Dendritic cell treated with granulocyte-macrophage colony-stimulating factor and Interleukin-4, amounts not matched to agents 40 ng/mL and 50 ng/mL, for 4 days (primary cell): ENCODE measurements at regions of chr15 and their contacts with region 1.

Region 1: DNA sequence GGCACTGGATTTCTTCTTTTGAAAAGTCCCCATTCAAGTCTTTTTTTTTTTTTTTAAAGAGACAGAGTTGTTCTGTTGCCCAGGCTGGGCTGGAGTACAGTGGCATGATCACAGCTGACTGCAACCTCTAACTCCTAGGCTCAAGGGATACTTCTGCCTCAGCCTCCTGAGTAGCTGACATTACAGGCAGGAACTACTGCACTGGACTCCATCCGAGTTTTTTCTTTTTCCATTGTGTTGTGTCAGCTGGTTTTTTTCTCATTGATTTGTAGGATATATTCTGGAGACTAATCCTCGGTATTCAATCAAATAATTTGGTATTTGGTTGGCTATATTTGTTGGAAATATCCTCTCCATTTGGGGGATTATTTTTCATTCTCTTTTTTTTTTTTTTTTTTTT is 11.8 kb downstream of the POLR2M start:
- H3K4me3 Mint-ChIP-seq: no peak overlapping the region
- H3K27ac Mint-ChIP-seq: no peak overlapping the region
- H3K4me1 Mint-ChIP-seq: no peaks in the 10 kb centered on the region
- H3K27me3 Mint-ChIP-seq: no peaks in the 10 kb centered on the region

Region 2: DNA sequence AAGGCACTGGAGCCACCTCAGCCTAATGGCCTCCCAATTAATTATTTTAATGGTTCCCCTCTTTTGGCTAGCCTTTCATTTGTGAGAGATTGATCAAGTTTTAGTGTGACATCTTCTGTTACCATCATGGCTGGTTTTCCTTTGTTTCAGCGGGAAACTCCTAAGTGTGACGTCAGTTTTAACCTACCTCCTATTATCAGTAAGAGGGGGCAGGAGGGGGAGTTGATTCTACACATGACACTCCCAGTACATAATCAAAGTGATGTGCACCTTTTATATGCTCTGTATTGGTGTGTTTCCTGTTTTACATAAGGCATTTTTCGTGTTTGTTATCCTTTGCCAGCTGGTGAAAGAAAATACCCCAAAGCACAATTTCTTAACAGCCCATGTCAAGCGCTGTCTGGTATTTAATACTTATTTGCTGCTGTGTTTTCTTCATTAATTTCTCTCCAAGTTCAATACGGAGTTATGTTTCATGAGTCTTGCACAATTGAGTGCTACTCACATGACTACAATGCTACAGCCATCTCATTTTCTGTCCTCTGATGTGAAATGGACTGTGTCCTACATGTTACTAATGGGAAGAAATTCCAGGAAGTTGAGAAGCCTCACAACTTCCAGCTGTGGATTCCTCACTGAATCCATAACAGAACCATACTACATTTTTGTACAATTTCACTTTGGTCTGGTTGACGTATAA is 64.0 kb before region 1 on chr15:
- intact Hi-C with region 1: loop called (anchors 10 kb)
- H3K4me3 Mint-ChIP-seq: no peak overlapping the region
- H3K27ac Mint-ChIP-seq: no peak overlapping the region
- H3K4me1 Mint-ChIP-seq: no peaks in the 10 kb centered on the region
- H3K27me3 Mint-ChIP-seq: peaks cover 2% of the 10 kb centered on the region